Dendritic cell treated with granulocyte-macrophage colony-stimulating factor and Interleukin-4, amounts not matched to agents 40 ng/mL and 50 ng/mL, for 4 days (primary cell): ENCODE measurements at regions of chr9 and their contacts with region 1.

Region 1: GRCh38 chr9:97982683-97983588 is at the start of gene ANP32B:
- H3K4me3 Mint-ChIP-seq: peak within 1 kb of the TSS; percentile 91
- H3K27ac Mint-ChIP-seq: peak within 1 kb of the TSS; percentile 96
- H3K4me1 Mint-ChIP-seq: peaks cover 29% of the 10 kb centered on the region
- H3K27me3 Mint-ChIP-seq: peaks cover 14% of the 10 kb centered on the region

Region 2: DNA sequence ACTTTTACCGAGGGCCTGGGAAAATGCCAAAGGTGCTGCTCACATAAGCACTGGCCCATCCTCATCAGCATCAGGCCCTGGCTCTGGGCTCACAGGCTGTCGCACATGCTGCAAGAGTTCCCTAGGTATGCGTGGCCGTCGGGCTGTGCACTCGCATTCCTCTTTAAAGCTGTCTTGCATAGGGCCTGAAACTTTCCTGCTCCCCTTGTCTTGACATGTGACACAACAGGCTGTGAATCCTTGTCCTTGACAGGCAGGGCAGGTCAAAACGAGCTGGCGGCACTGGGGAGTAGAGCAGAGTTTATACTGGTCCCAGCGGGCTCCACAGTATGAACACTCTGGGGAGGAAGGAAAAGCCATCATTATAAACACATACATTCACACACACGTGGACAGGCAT is 380.5 kb before region 1 on chr9:
- intact Hi-C with region 1: no loop called
- H3K4me3 Mint-ChIP-seq: no peak overlapping the region
- H3K27ac Mint-ChIP-seq: no peak overlapping the region
- H3K4me1 Mint-ChIP-seq: peaks cover 8% of the 10 kb centered on the region
- H3K27me3 Mint-ChIP-seq: no peaks in the 10 kb centered on the region

Region 3: DNA sequence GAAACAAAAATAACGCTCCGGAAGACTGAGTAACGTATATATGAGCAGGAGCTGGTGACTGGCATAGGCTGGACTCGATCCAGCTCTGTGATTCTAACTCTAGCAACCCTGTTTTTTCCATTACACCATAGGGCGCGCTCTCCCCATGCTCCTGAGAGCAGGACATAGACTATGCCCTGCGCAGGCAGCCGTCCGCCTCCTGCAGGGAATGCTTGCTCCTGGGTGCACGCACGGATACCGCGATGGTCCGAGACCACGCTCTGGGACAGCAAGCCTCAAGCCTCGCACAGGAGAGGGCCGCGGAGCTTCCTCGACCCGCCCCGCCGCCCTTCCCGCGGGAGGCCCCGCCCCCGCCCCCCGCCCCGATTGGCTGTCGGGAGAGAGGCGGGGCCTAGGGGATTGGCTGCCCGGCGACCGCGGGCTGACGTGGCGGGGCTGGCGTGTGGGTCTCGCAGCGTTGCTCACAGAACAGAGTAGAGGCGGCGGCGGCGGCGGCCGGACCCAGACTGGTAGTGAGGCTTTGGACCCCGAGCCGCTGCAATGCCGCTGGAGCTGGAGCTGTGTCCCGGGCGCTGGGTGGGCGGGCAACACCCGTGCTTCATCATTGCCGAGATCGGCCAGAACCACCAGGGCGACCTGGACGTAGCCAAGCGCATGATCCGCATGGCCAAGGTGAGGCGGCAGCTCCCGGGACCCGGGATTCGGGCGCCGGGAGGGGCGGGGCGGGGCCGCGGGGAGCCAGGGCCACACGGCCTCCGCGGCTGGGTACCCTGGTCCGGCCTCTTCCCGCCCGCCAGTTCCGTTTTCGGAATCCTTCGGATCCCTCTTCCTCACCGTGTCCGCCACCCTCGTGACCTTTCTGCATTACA is 73.6 kb after region 1 on chr9 and contains the start of gene NANS:
- intact Hi-C with region 1: loop called (anchors 1 kb)
- H3K4me3 Mint-ChIP-seq: peak within 1 kb of the TSS; percentile 93
- H3K27ac Mint-ChIP-seq: peak within 1 kb of the TSS; percentile 96
- H3K4me1 Mint-ChIP-seq: peaks cover 30% of the 10 kb centered on the region
- H3K27me3 Mint-ChIP-seq: no peaks in the 10 kb centered on the region

Region 4: GRCh38 chr9:98248737-98249474 is 266.0 kb after region 1 on chr9:
- intact Hi-C with region 1: loop called (anchors 5 kb)
- H3K4me3 Mint-ChIP-seq: peak overlapping the region; percentile 50
- H3K27ac Mint-ChIP-seq: peak overlapping the region; percentile 97
- H3K4me1 Mint-ChIP-seq: peaks cover 84% of the 10 kb centered on the region
- H3K27me3 Mint-ChIP-seq: no peaks in the 10 kb centered on the region